SK-N-SH (cell line): ENCODE measurements at regions of chr14 and their contacts with region 1.

Region 1: DNA sequence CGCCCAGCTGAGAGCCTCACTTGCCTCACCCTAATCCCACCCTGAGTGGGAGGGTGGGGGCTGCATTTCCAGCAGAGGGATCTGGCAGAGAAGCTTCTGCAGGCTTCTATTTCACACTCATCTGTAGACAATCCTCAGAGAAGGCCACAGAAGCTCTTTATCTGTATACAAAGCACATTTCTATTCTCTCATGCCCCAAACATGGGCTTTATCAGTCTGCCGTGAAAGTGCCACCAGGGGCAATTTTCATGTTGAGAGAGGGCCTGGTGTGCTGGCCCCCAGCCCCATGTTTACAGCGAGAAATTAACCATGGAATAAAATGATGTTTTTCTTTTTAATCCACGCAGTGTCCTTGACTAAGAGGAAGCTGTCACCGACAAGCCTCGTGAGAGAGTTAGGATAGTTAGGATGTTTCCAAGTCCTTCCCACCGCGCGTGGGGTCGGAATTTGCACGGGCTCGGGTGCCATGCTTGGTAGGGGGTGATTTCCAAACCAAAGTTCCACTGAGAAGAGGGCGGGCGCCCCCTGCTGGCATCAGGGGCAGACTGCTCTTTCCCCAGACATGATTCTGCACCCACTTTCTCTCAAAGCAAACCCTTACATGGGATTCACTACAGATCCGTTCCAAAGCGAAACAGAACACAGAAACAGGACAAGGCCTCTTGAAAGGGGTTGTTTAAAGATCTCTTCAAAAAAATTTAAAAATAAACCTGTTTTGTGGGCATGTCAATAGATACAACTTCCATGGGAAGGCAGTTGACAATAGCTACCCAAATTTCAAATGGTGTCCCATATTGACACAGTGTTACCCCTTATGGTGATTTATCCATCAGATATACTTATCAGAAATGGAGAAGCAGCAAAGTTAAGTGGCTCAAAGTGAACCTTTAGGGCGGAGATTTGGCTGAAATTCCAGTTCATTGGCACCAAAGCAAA is 19.4 kb downstream of the BDKRB1 start:
- DNase-seq: peak; percentile 78
- H3K4me3 ChIP-seq: peak overlapping the region in 1 of 2 experiments; percentile 14; a peak in 1 of 4 replicates
- H3K27ac ChIP-seq: peak overlapping the region; percentile 67 to 68
- H3K4me1 ChIP-seq: peaks cover 18 to 30% of the 10 kb centered on the region in 2 experiments
- H3K27me3 ChIP-seq: no peaks in the 10 kb centered on the region
- CTCF ChIP-seq: peak; percentile 98
- EP300 ChIP-seq: no peak
- RAD21 ChIP-seq: peak; percentile 96

Region 2: DNA sequence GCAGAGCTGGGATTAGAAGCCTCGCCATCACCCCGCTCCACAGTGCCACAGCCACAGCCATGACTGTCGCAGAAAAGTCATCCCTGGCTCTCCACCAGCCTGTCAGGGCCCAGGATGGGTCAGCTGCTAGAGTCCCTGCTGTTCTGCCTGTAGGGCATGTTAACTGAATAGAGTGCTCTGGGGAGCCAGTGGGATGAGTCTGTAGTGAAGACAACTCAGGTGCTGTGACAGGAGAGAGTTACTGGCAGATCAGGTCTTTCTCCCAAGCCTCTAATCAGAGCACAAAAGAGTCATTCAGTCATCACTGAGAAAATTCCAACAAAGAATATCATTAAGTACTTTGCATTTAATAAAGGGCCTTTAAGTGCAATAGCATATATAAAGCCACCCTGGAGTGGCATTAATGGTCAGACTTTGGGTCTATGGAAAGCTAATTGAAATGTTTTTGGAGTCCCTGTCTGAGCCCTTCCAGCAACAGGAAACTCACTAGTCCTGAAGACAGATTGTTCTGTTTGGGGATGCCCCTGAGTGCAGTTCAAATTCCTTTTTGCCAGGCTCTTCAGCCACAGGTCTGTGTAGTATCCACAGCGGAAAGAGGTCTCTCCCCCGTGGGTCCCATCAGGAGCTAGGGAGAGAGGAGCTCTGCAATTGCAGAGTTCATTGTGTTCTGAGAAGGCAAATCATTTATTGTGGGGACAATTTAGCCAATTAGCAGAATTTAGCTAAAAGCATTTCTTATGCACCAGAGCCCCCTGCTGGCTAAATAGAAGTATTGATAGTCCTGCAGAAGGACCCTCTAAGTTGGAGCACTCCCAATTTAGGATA is 281.5 kb before region 1 on chr14:
- CTCF ChIA-PET with region 1: interaction called, 129 read pairs
- POLR2A ChIA-PET with region 1: no interaction called
- DNase-seq: peak; percentile 47
- H3K4me3 ChIP-seq: peak overlapping the region in 1 of 2 experiments; percentile 36; a peak in 1 of 4 replicates
- H3K27ac ChIP-seq: no peak overlapping the region
- H3K4me1 ChIP-seq: no peaks in the 10 kb centered on the region
- H3K27me3 ChIP-seq: no peaks in the 10 kb centered on the region
- CTCF ChIP-seq: peak; percentile 93
- EP300 ChIP-seq: no peak
- RAD21 ChIP-seq: peak; percentile 95

Region 3: GRCh38 chr14:96053600-96054381 is 221.7 kb before region 1 on chr14:
- CTCF ChIA-PET with region 1: interaction called, 23 read pairs
- POLR2A ChIA-PET with region 1: no interaction called
- DNase-seq: peak; percentile 47
- H3K4me3 ChIP-seq: no peak overlapping the region
- H3K27ac ChIP-seq: peak overlapping the region; percentile 72 to 84
- H3K4me1 ChIP-seq: peaks cover 10 to 90% of the 10 kb centered on the region in 2 experiments; a peak in 3 of 4 replicates
- H3K27me3 ChIP-seq: no peaks in the 10 kb centered on the region
- CTCF ChIP-seq: no peak
- EP300 ChIP-seq: no peak
- RAD21 ChIP-seq: no peak

Region 4: GRCh38 chr14:96204151-96205058 is 71.0 kb before region 1 on chr14 and contains the start of gene BDKRB2:
- CTCF ChIA-PET with region 1: interaction called, 17 read pairs
- POLR2A ChIA-PET with region 1: no interaction called
- DNase-seq: peak; percentile 91
- H3K4me3 ChIP-seq: peak within 1 kb of the TSS; percentile 48 to 64
- H3K27ac ChIP-seq: peak within 1 kb of the TSS in 1 of 2 experiments; percentile 39; a peak in 3 of 4 replicates
- H3K4me1 ChIP-seq: peaks cover 11 to 22% of the 10 kb centered on the region in 2 experiments; a peak in 2 of 4 replicates
- H3K27me3 ChIP-seq: no peaks in the 10 kb centered on the region
- CTCF ChIP-seq: no peak
- EP300 ChIP-seq: peak; percentile 53 to 54; a peak in 2 of 4 replicates
- RAD21 ChIP-seq: peak; percentile 33
- polyA plus RNA-seq, gene BDKRB2: 4.8 and 6.4 TPM in 2 replicates

Region 5: DNA sequence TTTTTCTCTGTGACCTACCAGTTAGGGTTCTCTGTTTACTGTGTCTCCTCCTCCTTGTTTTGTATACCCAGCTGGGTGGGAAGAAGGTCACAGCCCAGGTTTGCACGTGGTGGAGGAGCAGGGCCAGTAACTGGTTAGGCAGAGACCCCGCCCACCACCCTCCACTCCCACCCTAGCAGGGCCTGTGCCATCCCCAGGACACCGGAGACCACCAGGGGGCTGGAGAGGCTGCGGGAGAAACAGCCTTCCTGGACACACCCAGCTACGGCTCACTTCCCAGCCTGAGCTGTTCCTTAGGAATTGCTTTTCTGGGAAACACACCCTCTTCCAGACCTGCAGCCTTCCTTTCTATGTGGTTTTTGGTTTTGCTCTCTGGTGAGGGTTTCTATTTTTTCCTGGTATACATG is 49.7 kb before region 1 on chr14:
- CTCF ChIA-PET with region 1: interaction called, 13 read pairs
- POLR2A ChIA-PET with region 1: no interaction called
- DNase-seq: peak; percentile 60
- H3K4me3 ChIP-seq: no peak overlapping the region
- H3K27ac ChIP-seq: no peak overlapping the region
- H3K4me1 ChIP-seq: no peaks in the 10 kb centered on the region
- H3K27me3 ChIP-seq: no peaks in the 10 kb centered on the region
- CTCF ChIP-seq: peak; percentile 36
- EP300 ChIP-seq: no peak
- RAD21 ChIP-seq: peak; percentile 13; the same call in 1 of the 2 replicates

Region 6: GRCh38 chr14:96297000-96297399 is 21.6 kb after region 1 on chr14:
- CTCF ChIA-PET with region 1: interaction called, 23 read pairs
- POLR2A ChIA-PET with region 1: no interaction called
- DNase-seq: peak; percentile 31
- H3K4me3 ChIP-seq: no peak overlapping the region
- H3K27ac ChIP-seq: no peak overlapping the region
- H3K4me1 ChIP-seq: peaks cover 0 to 3% of the 10 kb centered on the region in 2 experiments; a peak in 2 of 4 replicates
- H3K27me3 ChIP-seq: no peaks in the 10 kb centered on the region
- CTCF ChIP-seq: peak; percentile 69
- EP300 ChIP-seq: no peak
- RAD21 ChIP-seq: peak; percentile 73

Region 7: DNA sequence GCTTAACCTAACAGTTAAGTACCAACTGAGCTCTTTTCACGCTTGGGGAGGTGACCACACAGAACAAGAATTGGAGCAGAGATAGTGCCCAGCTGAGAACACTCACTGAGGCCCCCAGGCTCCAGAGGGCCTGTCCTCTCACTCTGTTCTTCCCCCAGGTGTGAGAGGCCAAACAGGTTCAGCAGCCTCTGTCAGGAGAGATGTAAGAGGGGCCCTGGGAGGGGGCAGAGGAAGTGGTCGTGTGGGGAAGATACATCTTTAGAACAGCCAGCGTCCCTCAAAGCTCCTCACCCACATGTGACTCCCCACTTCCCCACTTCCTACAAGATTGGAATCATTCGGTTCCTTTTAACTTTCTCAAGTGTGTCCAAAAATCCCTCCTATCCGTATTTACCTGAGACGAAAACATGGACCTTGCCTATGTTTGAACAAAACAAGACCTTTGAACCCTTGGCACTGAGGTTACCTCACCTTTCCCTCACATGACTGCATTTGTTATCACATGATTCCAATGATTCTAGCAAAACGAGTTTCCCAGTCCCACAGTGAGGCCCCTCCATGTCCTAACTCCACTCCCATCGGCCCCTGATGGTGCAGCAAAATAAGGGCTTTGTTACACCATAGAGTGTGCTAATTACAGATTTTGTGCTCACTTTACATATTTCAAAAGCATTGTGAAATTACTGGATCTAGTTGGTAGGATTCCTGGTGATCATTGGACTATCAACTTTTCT is 186.7 kb after region 1 on chr14:
- CTCF ChIA-PET with region 1: no interaction called
- POLR2A ChIA-PET with region 1: no interaction called
- DNase-seq: no peak
- H3K4me3 ChIP-seq: no peak overlapping the region
- H3K27ac ChIP-seq: no peak overlapping the region
- H3K4me1 ChIP-seq: no peaks in the 10 kb centered on the region
- H3K27me3 ChIP-seq: no peaks in the 10 kb centered on the region
- CTCF ChIP-seq: no peak
- EP300 ChIP-seq: no peak
- RAD21 ChIP-seq: no peak